ENCODE measurements at regions of chr10 and their contacts with region 1.

Region 1: GRCh38 chr10:89217057-89217990 is 10.2 kb upstream of the CH25H start:
- DNase-seq: peak; percentile 33
- H3K4me3 ChIP-seq: peak overlapping the region; percentile 7
- H3K27ac ChIP-seq: peak overlapping the region; percentile 55
- H3K4me1 ChIP-seq: peaks cover 14% of the 10 kb centered on the region
- H3K27me3 ChIP-seq: no peaks in the 10 kb centered on the region
- CTCF ChIP-seq: peak; percentile 77

Region 2: DNA sequence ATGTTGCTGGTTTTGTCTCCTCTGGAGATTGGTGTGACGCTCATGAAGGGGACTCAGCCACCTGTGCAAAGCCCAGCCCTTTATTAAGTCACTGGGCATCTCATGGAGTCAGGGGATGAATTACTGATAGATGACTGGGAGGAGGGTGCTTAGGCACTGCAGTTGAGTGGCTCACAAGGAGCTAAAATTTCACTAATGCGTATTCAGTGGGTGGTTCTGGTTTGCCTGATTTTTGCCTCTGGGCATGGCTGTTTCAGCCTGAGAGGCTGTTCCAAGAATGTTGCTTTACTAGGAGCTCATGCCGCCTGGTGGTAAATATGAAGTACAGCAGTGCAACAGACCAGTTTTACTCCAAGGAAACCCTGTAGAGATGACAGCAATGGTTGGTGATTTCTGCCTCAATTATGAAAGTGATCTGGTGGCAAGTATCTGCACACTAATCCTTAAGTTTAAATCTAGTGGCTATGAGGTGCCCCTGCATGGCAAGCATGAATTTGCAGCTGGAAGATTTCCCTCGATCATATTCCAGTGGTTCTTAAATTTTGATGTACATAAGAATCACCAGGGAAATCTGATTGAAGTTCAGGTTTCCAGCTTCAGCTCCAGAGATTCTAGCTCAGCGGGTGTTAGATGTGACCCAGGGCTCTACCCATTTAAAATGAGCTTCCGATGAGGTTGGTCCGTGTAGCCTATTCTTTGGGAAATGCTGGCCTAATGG is 284.6 kb before region 1 on chr10:
- intact Hi-C with region 1: loop called (anchors 5 kb)
- DNase-seq: no peak
- H3K4me3 ChIP-seq: no peak overlapping the region
- H3K27ac ChIP-seq: peak overlapping the region; percentile 45
- H3K4me1 ChIP-seq: peaks cover 39% of the 10 kb centered on the region
- H3K27me3 ChIP-seq: no peaks in the 10 kb centered on the region
- CTCF ChIP-seq: peak; percentile 94

Region 3: DNA sequence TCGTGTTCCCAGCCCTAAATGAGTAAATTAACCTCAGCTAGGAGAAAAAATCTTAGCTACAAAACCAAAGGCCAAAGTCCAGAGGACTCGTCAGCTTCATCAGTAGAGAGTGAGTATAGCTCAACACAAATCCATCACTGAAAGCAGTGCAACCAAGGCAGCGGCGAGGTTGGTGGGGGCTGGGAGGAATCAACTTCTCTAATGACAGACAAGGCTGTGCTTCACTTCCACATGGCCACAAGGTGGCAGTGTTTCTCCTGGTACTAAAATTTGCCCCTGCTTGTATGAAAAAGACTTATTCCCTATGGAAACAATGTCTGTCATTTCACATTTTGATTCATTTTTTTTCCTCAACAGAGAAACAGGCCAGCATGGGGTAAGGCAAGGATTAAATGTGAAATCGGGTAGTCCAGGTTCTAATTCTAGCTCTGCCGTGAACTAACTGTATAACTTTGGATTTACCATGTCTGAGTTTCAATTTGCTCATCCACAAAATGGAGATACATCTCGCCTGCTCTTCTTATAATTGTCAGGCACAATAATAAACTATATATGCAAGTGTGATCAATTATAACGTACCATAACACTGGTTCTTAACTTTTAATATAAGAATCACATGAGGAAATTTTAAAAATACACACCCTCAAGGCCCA is 187.4 kb before region 1 on chr10:
- intact Hi-C with region 1: loop called (anchors 1 kb)
- DNase-seq: peak; percentile 63
- H3K4me3 ChIP-seq: no peak overlapping the region
- H3K27ac ChIP-seq: no peak overlapping the region
- H3K4me1 ChIP-seq: peaks cover 37% of the 10 kb centered on the region
- H3K27me3 ChIP-seq: no peaks in the 10 kb centered on the region
- CTCF ChIP-seq: peak; percentile 93